ENCODE measurements at regions of chr1 and their contacts with region 1.

Region 1: GRCh38 chr1:43529206-43529731 is 1.4 kb upstream of the PTPRF start:
- DNase-seq: peak; percentile 66 to 88 (median 75)
- ATAC-seq: peak; percentile 73
- H3K4me3 ChIP-seq: no peak overlapping the region
- H3K4me3 Mint-ChIP-seq: peak overlapping the region; percentile 65
- H3K27ac ChIP-seq: no peak overlapping the region
- H3K27ac Mint-ChIP-seq: no peak overlapping the region
- H3K4me1 ChIP-seq: peaks cover 14% of the 10 kb centered on the region
- H3K4me1 Mint-ChIP-seq: peaks cover 29% of the 10 kb centered on the region
- H3K27me3 ChIP-seq: peaks cover 23 to 29% of the 10 kb centered on the region in 2 experiments
- H3K27me3 Mint-ChIP-seq: peaks cover 62% of the 10 kb centered on the region
- CTCF ChIP-seq: peak; percentile 93

Region 2: DNA sequence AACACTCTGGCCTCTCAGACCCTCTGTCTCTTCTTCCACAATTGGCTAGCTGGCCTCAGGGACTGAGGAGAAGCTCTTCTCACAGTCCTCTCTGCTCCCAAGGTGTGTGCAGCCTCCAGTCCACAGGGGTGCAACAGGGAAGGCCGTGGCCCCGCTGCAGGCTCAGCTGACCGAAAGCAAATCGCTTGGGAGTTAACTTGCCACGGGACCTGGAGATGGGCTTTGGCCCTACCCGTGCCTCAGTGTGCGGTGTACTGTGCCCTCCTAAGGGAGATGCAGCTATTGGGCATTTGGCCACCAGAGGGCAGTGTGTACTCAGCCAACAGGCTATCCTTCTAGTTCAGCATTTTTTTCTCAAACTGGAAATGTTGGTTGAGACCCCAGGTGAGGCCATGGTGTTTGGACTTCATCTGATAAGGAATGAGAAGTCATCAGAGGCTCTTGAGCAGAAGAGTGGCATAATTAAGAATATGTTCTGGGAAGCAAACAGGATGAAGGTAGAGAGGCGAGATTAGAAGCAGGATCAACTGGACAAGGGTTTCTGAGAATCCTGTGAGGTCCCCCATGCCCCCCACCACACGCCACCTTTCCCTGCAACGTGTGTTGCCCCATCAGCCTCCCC is 302.0 kb before region 1 on chr1:
- CTCF ChIA-PET with region 1: no interaction called
- POLR2A ChIA-PET with region 1: no interaction called
- intact Hi-C with region 1: loop called in 1 of 2 experiments (anchors 5 kb)
- DNase-seq: peak; percentile 73 to 91 (median 84)
- ATAC-seq: peak; percentile 89
- H3K4me3 ChIP-seq: no peak overlapping the region
- H3K4me3 Mint-ChIP-seq: no peak overlapping the region
- H3K27ac ChIP-seq: no peak overlapping the region
- H3K27ac Mint-ChIP-seq: no peak overlapping the region
- H3K4me1 ChIP-seq: peaks cover 3% of the 10 kb centered on the region
- H3K4me1 Mint-ChIP-seq: no peaks in the 10 kb centered on the region
- H3K27me3 ChIP-seq: no peaks in the 10 kb centered on the region
- H3K27me3 Mint-ChIP-seq: no peaks in the 10 kb centered on the region
- CTCF ChIP-seq: peak; percentile 89

Region 3: GRCh38 chr1:43565600-43566360 is 36.5 kb after region 1 on chr1:
- CTCF ChIA-PET with region 1: no interaction called
- POLR2A ChIA-PET with region 1: no interaction called
- intact Hi-C with region 1: no loop called
- DNase-seq: peak in 10 of 14 experiments; percentile 10 to 44 (median 29)
- ATAC-seq: peak; percentile 77
- H3K4me3 ChIP-seq: peak overlapping the region; percentile 54
- H3K4me3 Mint-ChIP-seq: peak overlapping the region; percentile 56
- H3K27ac ChIP-seq: no peak overlapping the region
- H3K27ac Mint-ChIP-seq: no peak overlapping the region
- H3K4me1 ChIP-seq: peaks cover 15% of the 10 kb centered on the region
- H3K4me1 Mint-ChIP-seq: no peaks in the 10 kb centered on the region
- H3K27me3 ChIP-seq: peaks cover 0 to 2% of the 10 kb centered on the region in 2 experiments
- H3K27me3 Mint-ChIP-seq: peaks cover 15% of the 10 kb centered on the region
- CTCF ChIP-seq: no peak

Region 4: DNA sequence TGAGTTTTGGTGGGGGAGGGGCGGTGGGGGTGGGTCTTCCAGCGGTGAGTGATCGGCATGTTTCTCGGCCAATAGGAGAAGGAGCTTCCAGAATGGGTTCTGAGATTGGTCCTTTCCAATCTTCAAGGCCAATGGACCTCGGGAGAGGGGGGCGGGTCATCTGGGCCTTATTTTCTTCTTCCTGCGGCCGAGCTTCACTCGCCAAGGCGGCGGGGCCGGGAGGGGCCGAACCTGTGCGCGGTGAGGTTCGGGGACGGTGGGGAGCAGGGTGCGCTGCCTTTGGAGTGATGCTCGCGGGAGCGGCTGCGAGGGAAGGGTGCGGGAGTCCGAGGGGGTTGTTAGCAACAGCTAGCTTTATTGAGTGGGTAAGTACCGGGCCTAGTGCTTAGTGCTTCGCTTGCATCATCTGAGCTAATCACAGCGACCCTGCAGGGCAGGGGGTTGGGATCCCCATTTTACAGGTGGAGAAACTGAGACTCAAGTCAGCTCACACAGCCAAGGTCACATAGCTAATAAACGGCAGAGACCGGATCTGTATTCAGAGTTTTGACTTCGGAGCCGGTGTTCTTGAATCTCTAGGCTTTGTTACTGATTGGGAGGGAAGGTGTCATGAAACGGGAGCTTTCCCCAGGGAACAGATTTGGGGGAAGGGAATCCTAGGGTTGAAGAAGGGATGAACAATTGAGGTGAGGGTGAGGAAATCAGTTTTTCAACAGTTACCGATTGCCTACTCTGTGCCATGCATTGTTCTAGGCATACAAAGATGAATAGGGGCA is 121.2 kb after region 1 on chr1:
- CTCF ChIA-PET with region 1: no interaction called
- POLR2A ChIA-PET with region 1: interaction called, 3 read pairs
- intact Hi-C with region 1: loop called in 1 of 2 experiments (anchors 5 kb)
- DNase-seq: peak in 13 of 14 experiments; percentile 78 to 96 (median 86)
- ATAC-seq: peak; percentile 71
- H3K4me3 ChIP-seq: peak overlapping the region; percentile 91
- H3K4me3 Mint-ChIP-seq: peak overlapping the region; percentile 98
- H3K27ac ChIP-seq: peak overlapping the region; percentile 75 to 79
- H3K27ac Mint-ChIP-seq: peak overlapping the region; percentile 90
- H3K4me1 ChIP-seq: peaks cover 32% of the 10 kb centered on the region
- H3K4me1 Mint-ChIP-seq: peaks cover 41% of the 10 kb centered on the region
- H3K27me3 ChIP-seq: no peaks in the 10 kb centered on the region
- H3K27me3 Mint-ChIP-seq: no peaks in the 10 kb centered on the region
- CTCF ChIP-seq: no peak

Region 5: GRCh38 chr1:43763497-43763973 is 234.3 kb after region 1 on chr1:
- CTCF ChIA-PET with region 1: no interaction called
- POLR2A ChIA-PET with region 1: no interaction called
- intact Hi-C with region 1: loop called in 1 of 2 experiments (anchors 5 kb)
- DNase-seq: peak in 13 of 14 experiments; percentile 1 to 70 (median 17)
- ATAC-seq: peak; percentile 78
- H3K4me3 ChIP-seq: no peak overlapping the region
- H3K4me3 Mint-ChIP-seq: no peak overlapping the region
- H3K27ac ChIP-seq: no peak overlapping the region
- H3K27ac Mint-ChIP-seq: no peak overlapping the region
- H3K4me1 ChIP-seq: no peaks in the 10 kb centered on the region
- H3K4me1 Mint-ChIP-seq: peaks cover 6% of the 10 kb centered on the region
- H3K27me3 ChIP-seq: no peaks in the 10 kb centered on the region
- H3K27me3 Mint-ChIP-seq: no peaks in the 10 kb centered on the region
- CTCF ChIP-seq: peak; percentile 75

Region 6: DNA sequence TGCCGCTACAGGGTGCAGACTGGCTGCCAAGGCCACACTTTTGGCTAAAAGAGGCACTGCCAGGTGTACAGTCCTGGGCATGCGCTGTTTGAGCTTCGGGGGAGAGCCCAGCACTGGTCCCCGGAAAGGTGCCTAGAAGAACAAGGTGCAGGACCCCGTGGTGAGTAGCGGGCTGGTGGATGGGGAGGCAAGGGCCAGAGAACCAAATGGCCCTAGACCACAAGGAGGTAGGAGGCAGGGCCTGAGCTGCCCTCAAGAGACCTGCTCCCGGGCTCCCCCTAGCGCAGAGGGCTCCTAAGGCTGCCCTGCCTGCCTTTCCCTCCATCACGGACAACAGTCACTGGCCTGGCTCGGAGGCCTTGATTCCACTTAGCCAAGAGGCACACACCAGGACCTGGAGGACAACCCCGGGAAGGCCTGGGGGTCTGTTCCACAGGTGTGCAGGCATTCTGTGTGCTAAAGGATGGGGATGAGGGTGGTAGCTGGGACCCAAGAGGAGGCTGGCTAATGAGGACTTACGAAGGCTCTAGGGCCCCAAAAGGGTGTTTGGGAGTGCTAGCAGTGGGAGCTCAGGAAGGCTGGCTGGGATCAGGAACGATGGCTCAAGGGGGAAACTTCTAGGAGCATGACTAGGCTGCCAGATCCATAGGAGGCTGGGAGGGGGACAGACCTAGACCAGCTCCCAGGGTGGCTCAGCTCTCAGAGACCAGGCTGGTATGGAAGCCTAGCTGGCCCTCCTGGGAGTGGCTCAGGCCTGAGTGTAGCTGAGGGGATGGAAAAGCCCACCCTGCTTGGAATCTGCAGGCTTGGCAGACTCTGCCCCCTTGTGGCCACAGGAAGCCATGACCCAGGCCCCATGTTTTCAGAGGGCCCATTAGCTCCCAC is 405.1 kb after region 1 on chr1:
- CTCF ChIA-PET with region 1: interaction called, 6 read pairs
- POLR2A ChIA-PET with region 1: no interaction called
- intact Hi-C with region 1: loop called (anchors 1 to 2 kb)
- DNase-seq: peak in 13 of 14 experiments; percentile 18 to 69 (median 40)
- ATAC-seq: peak; percentile 65
- H3K4me3 ChIP-seq: no peak overlapping the region
- H3K4me3 Mint-ChIP-seq: peak overlapping the region; percentile 48
- H3K27ac ChIP-seq: no peak overlapping the region
- H3K27ac Mint-ChIP-seq: no peak overlapping the region
- H3K4me1 ChIP-seq: peaks cover 33% of the 10 kb centered on the region
- H3K4me1 Mint-ChIP-seq: peaks cover 15% of the 10 kb centered on the region
- H3K27me3 ChIP-seq: peaks cover 35 to 41% of the 10 kb centered on the region in 2 experiments
- H3K27me3 Mint-ChIP-seq: peaks cover 36% of the 10 kb centered on the region
- CTCF ChIP-seq: peak; percentile 68

Region 7: GRCh38 chr1:44036409-44037139 is 507.3 kb after region 1 on chr1:
- CTCF ChIA-PET with region 1: interaction called, 8 read pairs
- POLR2A ChIA-PET with region 1: no interaction called
- intact Hi-C with region 1: loop called (anchors 1 to 2 kb)
- DNase-seq: peak; percentile 52 to 82 (median 61)
- ATAC-seq: peak; percentile 91
- H3K4me3 ChIP-seq: no peak overlapping the region
- H3K4me3 Mint-ChIP-seq: no peak overlapping the region
- H3K27ac ChIP-seq: no peak overlapping the region
- H3K27ac Mint-ChIP-seq: no peak overlapping the region
- H3K4me1 ChIP-seq: peaks cover 3% of the 10 kb centered on the region
- H3K4me1 Mint-ChIP-seq: peaks cover 4% of the 10 kb centered on the region
- H3K27me3 ChIP-seq: no peaks in the 10 kb centered on the region
- H3K27me3 Mint-ChIP-seq: no peaks in the 10 kb centered on the region
- CTCF ChIP-seq: peak; percentile 84

Region 8: GRCh38 chr1:44049839-44050238 is 520.6 kb after region 1 on chr1:
- CTCF ChIA-PET with region 1: interaction called, 3 read pairs
- POLR2A ChIA-PET with region 1: no interaction called
- intact Hi-C with region 1: loop called (anchors 1 to 2 kb)
- DNase-seq: no peak
- ATAC-seq: no peak
- H3K4me3 ChIP-seq: no peak overlapping the region
- H3K4me3 Mint-ChIP-seq: no peak overlapping the region
- H3K27ac ChIP-seq: no peak overlapping the region
- H3K27ac Mint-ChIP-seq: no peak overlapping the region
- H3K4me1 ChIP-seq: no peaks in the 10 kb centered on the region
- H3K4me1 Mint-ChIP-seq: no peaks in the 10 kb centered on the region
- H3K27me3 ChIP-seq: peaks cover 0 to 4% of the 10 kb centered on the region in 2 experiments
- H3K27me3 Mint-ChIP-seq: peaks cover 7% of the 10 kb centered on the region
- CTCF ChIP-seq: no peak

Measured in CD4-positive, alpha-beta T cell (primary cell).